Endothelial cell of umbilical vein (primary cell): ENCODE measurements at regions of chr1 and their contacts with region 1.

Region 1: DNA sequence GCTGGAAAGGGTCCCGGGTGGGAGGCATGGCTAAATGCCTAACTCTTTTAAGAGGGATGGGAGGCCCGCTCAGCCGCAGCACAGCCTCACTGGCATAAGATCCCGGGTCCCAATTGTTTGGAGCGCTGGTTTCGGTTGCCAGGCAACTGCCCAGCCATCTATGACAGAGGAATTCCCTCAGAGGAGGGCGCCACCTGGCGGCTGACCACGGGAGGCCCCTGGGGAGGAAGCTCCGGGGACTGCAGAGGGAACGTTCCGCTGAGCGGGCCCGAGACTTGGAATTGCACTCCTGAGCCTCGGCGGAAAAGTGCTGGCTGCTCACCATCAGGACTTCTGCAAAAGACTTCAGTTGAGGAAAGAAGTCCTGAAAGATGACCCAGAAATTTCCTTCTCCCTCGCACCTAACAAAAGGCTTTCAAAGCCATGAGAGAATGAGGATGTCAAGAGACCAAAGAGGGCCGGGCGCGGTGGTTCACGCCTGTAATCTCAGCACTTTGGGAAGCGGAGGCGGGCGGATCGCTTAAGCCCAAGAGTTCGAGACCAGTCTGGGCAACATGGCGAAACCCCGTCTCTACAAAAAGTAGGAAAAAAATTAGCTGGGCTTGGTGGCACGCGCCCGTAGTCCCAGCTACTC is 1.1 kb upstream of the ELAPOR1 start:
- DNase-seq: peak; percentile 87
- H3K4me3 ChIP-seq: no peak overlapping the region
- H3K27ac ChIP-seq: no peak overlapping the region
- H3K4me1 ChIP-seq: peaks cover 7% of the 10 kb centered on the region
- H3K27me3 ChIP-seq: peaks cover 39 to 60% of the 10 kb centered on the region in 2 experiments
- CTCF ChIP-seq: peak; percentile 98 to 99
- POLR2A ChIP-seq: no peak

Region 2: DNA sequence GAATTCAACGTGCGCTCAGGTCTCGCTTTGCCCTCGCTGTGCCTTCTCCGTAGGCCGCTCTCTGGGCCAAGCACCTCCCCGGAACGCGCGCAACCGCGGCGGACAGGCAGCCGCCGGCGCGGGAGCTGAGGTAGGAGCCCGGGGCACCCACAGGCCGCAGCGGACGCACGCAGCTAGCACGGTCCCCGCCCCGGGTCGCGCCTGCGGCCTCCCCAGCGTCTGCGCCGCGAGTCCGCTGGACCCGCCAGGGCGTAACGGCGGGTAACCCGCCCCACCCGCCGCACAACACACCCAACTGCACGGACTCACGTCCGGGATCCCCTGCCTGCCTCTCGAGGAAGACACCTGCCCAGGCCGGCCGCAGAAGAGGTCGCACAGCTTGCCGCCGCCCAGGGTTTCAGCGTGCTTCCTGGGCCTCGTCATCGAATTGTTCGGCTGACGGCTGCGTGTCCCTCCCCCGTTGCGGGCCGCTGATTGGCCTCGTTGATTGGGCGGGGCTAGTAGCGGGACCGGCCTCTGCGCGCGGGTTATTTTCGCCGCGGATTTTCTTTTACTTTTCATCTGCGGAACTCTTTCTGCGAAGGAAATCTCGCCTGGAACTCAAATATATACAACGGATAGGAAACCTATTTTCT is 149.6 kb before region 1 on chr1 and contains the start of gene CLCC1:
- CTCF ChIA-PET with region 1: interaction called, 5 read pairs
- POLR2A ChIA-PET with region 1: no interaction called
- dilution Hi-C with region 1: no loop called
- intact Hi-C with region 1: loop called (anchors 2 kb)
- DNase-seq: peak; percentile 90
- H3K4me3 ChIP-seq: peak within 1 kb of the TSS; percentile 89 to 96 (median 94)
- H3K27ac ChIP-seq: peak within 1 kb of the TSS; percentile 76
- H3K4me1 ChIP-seq: peaks cover 9% of the 10 kb centered on the region
- H3K27me3 ChIP-seq: no peaks in the 10 kb centered on the region
- CTCF ChIP-seq: no peak
- POLR2A ChIP-seq: peak; percentile 84
- total RNA-seq, gene CLCC1: 28.8 and 36.3 TPM in 2 replicates

Region 3: DNA sequence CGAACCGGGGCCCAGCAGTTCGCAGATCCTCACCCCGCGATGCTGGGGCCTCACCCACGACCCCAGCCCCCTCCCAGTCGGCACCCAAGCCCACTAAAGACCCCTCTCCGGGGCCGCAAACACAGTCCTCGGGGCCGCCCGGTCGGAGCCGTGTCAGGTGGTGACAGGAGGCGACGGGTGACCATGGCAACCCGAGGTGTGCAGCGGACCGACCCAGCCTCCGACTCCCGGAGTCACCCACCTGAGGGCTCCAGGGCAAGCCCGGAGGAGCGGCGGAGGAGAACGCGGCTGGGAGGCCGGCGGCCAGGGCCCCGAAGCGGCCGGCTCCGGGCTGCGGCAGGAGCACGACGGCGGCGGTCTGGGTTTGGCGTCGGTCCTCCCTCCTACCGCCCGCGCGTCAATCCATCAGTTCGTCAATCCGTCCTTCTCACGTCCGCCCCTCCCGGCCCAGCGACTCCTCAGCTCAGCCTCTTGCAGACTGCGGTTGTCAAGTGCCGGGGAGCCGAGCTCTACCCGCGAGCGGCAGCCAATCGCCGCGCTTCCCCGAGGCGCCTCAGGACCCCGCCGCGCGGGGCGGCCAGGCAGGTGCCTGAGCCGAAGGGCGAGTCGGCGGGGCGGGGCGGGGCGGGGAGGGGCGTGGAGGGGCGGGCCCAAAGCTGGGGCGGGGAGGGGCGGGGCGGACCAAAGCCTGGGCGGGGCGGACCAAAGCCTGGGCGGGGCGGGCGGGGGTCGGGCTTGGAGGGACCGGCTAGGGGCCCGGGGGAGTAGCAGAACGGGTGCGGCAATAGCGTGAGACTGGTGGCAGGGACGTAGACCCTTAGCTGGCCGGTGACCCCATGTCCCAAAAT is 70.9 kb before region 1 on chr1 and contains the start of gene WDR47:
- CTCF ChIA-PET with region 1: interaction called, 8 read pairs
- POLR2A ChIA-PET with region 1: no interaction called
- dilution Hi-C with region 1: no loop called
- intact Hi-C with region 1: loop called (anchors 5 kb)
- DNase-seq: peak; percentile 94
- H3K4me3 ChIP-seq: peak within 1 kb of the TSS; percentile 92 to 96 (median 94)
- H3K27ac ChIP-seq: peak within 1 kb of the TSS; percentile 38
- H3K4me1 ChIP-seq: peaks cover 10% of the 10 kb centered on the region
- H3K27me3 ChIP-seq: no peaks in the 10 kb centered on the region
- CTCF ChIP-seq: no peak
- POLR2A ChIP-seq: peak; percentile 98
- total RNA-seq, gene WDR47: 18.2 and 19.0 TPM in 2 replicates

Region 4: GRCh38 chr1:109061183-109061582 is 51.6 kb before region 1 on chr1:
- CTCF ChIA-PET with region 1: no interaction called
- POLR2A ChIA-PET with region 1: no interaction called
- dilution Hi-C with region 1: no loop called
- intact Hi-C with region 1: no loop called
- DNase-seq: no peak
- H3K4me3 ChIP-seq: no peak overlapping the region
- H3K27ac ChIP-seq: no peak overlapping the region
- H3K4me1 ChIP-seq: no peaks in the 10 kb centered on the region
- H3K27me3 ChIP-seq: no peaks in the 10 kb centered on the region
- CTCF ChIP-seq: no peak
- POLR2A ChIP-seq: no peak

Region 5: DNA sequence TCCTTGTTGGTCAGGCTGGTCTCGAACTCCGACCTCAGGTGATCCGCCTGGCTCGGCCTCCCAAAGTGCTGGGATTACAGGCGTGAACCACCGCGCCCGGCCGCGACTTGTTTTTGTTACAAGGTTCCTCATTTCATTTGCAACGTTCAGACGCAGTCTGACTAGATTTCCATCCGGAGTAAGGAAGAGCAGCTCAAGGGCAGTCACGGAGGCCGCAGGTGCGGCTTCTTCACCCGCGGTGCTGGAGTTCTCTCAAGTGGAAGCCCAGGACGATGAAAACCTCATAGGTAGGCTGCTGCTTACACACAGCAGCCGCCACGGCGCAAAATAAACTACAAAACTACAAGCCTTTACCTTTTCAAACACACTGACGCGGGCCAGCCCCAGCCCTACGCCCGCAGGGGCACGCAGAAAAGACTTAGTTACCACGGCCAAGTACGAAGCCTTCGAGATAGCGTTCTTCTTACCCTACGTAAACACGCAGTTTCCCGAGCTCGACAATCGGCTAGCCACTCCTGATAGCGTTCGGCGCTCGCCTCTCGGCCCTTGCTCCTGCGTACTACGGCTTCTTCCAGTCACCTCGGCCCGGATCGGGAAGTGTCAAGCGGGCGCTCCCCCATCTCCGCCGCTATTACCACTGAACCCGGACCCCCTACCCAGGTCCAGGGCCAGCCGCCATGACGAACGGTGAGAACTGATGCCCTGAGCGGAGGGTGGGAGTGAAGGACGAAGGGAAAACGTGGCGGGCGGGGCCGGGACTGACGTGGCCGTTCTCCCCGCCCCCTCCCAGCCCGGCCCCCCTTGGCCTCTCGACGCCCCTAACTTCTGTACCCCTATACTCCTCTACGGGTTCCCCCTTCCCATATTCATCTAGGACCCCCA is 22.3 kb before region 1 on chr1 and contains the start of gene TMEM167B:
- CTCF ChIA-PET with region 1: interaction called, 25 read pairs
- POLR2A ChIA-PET with region 1: interaction called, 3 read pairs
- dilution Hi-C with region 1: no loop called
- intact Hi-C with region 1: loop called (anchors 1 kb)
- DNase-seq: peak; percentile 99
- H3K4me3 ChIP-seq: peak within 1 kb of the TSS; percentile 97 to 99 (median 97)
- H3K27ac ChIP-seq: peak within 1 kb of the TSS; percentile 63
- H3K4me1 ChIP-seq: peaks cover 13% of the 10 kb centered on the region
- H3K27me3 ChIP-seq: no peaks in the 10 kb centered on the region
- CTCF ChIP-seq: no peak
- POLR2A ChIP-seq: peak; percentile 74
- total RNA-seq, gene TMEM167B: 19.9 and 21.1 TPM in 2 replicates

Region 6: DNA sequence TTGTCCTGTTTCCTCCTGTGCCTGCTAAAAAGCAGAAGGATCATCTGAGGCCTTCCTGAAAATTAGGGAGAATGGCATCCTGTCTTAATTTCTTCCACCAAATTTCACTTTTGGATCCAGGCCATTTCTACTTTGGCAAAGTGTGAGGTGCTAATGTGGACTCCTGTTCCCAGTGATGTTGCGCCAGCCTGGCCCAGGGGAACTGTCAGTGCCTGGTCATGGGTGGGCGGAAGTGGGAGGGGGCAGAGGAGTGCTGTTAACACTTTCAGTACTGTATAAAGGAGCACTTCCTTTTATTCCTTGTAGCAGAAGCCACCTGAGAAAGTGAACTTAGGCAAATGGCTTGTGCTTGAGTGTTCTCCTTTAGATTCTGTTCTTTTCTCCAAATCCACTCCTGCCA is 21.0 kb after region 1 on chr1:
- CTCF ChIA-PET with region 1: interaction called, 12 read pairs
- POLR2A ChIA-PET with region 1: no interaction called
- dilution Hi-C with region 1: no loop called
- intact Hi-C with region 1: loop called (anchors 2 kb)
- DNase-seq: no peak
- H3K4me3 ChIP-seq: no peak overlapping the region
- H3K27ac ChIP-seq: no peak overlapping the region
- H3K4me1 ChIP-seq: no peaks in the 10 kb centered on the region
- H3K27me3 ChIP-seq: peaks cover 0 to 3% of the 10 kb centered on the region in 2 experiments
- CTCF ChIP-seq: no peak
- POLR2A ChIP-seq: no peak

Region 7: DNA sequence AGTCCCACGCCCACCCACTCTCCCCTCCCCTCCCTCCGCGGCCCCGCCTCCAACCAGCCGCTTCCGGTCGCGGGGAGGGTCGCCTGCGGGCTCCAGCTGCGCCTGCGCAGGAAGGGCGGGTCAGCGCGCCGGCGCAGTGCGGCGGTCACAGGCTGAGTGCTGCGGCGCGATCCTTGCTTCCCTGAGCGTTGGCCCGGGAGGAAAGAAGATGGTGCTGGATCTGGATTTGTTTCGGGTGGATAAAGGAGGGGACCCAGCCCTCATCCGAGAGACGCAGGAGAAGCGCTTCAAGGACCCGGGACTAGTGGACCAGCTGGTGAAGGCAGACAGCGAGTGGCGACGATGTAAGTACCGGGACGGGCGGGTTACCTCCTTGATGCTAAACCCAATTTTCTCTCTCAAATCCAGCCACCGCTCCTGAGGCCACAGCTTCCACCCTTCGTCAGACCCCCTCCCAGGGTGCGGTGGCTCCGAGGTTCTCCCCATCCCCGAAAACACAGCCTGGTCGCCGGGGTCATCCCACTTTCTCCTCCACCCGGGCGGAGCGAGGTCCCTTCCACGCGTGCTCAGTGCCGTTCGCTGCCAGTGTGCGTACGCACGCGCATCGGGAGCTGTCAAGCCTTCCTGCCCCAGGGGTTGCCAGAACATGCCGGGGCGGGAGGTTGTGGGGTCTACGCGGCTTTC is 101.2 kb after region 1 on chr1 and contains the start of gene SARS1:
- CTCF ChIA-PET with region 1: interaction called, 20 read pairs
- POLR2A ChIA-PET with region 1: no interaction called
- dilution Hi-C with region 1: no loop called
- intact Hi-C with region 1: no loop called
- DNase-seq: peak; percentile 91
- H3K4me3 ChIP-seq: peak within 1 kb of the TSS; percentile 55 to 100 (median 94)
- H3K27ac ChIP-seq: peak within 1 kb of the TSS; percentile 76
- H3K4me1 ChIP-seq: peaks cover 20% of the 10 kb centered on the region
- H3K27me3 ChIP-seq: peaks cover 0 to 2% of the 10 kb centered on the region in 2 experiments
- CTCF ChIP-seq: no peak
- POLR2A ChIP-seq: peak; percentile 88
- total RNA-seq, gene SARS1: 176 and 178 TPM in 2 replicates

Region 8: DNA sequence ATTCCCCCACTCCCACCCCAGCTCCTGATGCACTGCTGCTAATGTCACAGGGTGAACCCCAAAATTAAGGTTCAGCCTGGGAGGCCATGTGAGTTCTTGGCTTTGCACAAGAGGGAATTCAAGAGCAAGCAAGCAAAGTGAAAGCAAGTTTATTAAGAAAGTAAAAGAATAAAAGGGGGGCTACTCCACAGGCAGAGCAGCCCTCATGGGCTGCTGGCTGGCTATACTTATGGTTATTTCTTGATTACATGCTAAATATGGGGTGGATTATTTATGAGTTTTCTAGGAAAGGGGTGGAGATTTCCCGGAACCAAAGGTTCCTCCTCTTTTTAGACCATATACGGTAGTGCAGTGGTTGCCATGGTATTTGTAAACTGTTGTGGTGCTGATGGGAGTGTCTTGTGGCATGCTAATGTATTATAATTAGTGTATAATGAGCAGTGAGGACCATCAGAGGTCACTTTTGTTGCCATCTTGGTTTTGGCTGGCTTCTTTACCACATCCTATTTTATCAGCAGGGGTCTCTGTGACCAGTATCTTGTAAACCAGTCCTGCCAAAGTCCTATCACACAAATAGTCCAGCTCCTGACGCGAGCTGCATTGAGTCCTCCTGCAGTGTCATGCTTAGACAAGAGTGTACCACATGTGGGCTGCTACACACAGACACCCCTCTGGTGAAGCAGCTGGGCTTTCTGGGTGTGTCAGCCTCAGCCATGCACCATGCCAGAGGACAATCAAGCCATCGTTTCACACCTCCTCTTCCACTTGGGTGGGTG is 751.5 kb after region 1 on chr1:
- CTCF ChIA-PET with region 1: no interaction called
- POLR2A ChIA-PET with region 1: no interaction called
- dilution Hi-C with region 1: no loop called
- intact Hi-C with region 1: no loop called
- DNase-seq: no peak
- H3K4me3 ChIP-seq: no peak overlapping the region
- H3K27ac ChIP-seq: no peak overlapping the region
- H3K4me1 ChIP-seq: no peaks in the 10 kb centered on the region
- H3K27me3 ChIP-seq: peaks cover 8% of the 10 kb centered on the region in 2 experiments
- CTCF ChIP-seq: no peak
- POLR2A ChIP-seq: no peak